ENCODE measurements at regions of chr1 and their contacts with region 1.

Region 1: DNA sequence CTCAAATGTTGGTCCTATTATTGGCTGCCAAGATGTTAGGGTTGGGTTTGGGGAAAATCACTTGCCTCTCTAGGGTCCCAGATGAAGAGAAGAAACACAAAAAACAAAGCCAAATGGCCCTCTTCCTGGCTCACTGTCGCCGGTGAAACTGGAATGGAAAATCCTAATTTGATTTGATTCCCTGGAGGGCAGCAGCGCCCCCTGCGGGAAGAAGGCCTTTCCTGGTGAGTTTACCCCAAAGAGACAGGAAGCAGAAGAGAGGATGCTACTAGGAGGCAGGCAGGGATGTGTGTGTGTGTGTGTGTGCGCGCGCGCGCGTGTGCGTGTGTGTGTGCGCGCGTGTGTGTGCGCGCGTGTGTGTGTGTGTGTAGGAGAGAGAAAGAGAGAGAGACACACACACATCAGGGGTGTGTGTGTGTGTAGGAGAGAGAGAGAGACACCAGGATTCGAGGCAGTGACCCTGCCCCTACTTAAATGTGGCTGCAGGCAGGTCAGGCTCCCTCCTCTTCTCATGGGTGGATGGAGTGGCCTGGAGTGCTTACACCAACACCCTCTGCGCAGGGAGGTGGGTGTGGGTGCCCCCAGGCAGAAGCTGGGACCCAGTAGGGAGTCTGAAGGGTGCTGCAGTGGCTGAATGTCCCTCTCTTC is 3.1 kb upstream of the SELENON start:
- H3K4me3 ChIP-seq: no peak overlapping the region
- H3K27ac ChIP-seq: no peak overlapping the region
- H3K4me1 ChIP-seq: 0 out of 2 replicates have a peak, but pooled peaks cover 2% of the 10 kb centered on the region
- CTCF ChIP-seq: peak; percentile 82

Region 2: DNA sequence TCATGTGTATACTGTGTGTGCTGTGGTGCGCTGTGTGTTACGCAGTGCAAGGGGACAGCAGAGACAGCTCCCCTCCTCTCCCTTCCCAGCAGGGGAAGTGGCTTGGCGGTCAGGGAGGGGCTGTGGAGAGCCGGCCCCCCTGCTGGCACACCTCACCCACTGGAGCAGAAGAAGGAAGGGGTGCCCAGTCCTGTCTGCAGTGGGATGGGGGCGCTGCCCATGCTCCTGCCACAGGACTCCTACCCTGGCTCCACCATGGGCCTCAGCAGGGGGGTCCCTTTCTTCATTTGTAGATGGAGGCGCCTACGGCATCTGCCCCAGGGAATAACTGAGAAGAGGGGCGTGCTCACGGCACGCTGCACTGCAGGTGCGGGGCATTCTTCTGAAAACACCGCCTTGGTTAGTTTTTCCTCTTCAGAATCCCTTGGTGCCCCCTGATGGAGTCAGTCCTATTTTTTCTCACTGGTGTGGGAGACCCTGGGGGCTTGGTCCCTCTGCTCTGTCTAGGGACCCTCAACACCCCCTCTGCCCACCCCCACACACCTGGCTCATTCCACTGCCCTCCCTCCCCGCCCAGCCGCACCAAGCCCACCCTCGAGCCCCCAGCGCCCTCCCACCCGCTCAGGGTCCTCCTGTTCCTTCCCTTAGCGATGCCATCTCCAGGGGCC is 267.3 kb before region 1 on chr1:
- CTCF ChIA-PET with region 1: no interaction called
- POLR2A ChIA-PET with region 1: no interaction called
- H3K4me3 ChIP-seq: no peak overlapping the region
- H3K27ac ChIP-seq: no peak overlapping the region
- H3K4me1 ChIP-seq: no peaks in the 10 kb centered on the region
- CTCF ChIP-seq: no peak

Region 3: GRCh38 chr1:25658791-25659431 is 138.0 kb before region 1 on chr1:
- CTCF ChIA-PET with region 1: no interaction called
- POLR2A ChIA-PET with region 1: no interaction called
- H3K4me3 ChIP-seq: no peak overlapping the region
- H3K27ac ChIP-seq: no peak overlapping the region
- H3K4me1 ChIP-seq: no peaks in the 10 kb centered on the region
- CTCF ChIP-seq: no peak

Region 4: DNA sequence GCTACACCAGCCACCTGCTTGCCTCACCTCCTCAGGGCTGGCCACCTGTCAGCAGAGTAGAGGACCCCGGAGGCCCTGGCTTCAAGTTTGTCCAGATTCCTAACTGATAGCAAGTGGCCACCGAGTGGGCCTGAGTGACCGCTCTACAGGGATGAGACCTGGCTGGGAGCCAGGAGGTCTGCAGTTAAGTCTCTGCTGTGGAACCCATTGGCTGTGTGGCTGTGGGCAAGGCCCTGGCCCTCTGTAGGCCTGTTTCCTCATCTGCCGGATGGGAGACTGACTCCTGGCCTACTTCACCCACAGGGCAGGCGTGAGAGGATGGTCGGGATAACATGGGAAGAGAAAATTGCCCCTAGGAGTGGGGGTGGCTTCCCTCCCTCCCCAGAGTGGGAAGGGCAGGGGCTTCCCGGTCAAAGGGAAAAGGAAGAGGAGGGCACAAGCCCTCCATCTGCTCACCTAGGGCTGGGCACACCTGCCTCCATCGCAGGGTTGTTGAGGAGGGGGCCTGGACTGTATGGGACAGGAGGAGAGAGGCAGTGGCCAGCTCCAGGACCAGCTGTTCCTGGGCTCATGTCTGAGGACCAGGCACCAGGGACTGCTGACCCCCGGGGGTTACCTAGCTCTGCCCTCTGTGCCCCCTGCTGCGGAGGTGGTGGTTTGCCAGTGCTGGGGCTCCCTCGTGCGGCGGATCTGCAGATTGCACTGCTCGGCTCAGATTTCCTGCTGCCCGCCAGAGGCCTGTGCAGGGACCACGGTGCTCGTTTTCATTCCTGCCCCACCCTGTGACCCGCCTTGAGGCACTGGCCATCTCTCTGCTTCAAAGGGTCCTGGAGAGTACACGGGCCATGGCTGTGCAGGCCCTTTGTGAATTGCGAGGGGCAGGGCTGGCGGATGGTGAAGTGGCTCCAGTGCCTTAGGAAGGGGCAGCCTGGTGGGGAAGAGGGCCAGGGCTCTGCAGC is 13.7 kb after region 1 on chr1:
- CTCF ChIA-PET with region 1: interaction called, 25 read pairs
- POLR2A ChIA-PET with region 1: interaction called, 14 read pairs
- H3K4me3 ChIP-seq: no peak overlapping the region
- H3K27ac ChIP-seq: no peak overlapping the region
- H3K4me1 ChIP-seq: no peaks in the 10 kb centered on the region
- CTCF ChIP-seq: peak; percentile 95

Region 5: DNA sequence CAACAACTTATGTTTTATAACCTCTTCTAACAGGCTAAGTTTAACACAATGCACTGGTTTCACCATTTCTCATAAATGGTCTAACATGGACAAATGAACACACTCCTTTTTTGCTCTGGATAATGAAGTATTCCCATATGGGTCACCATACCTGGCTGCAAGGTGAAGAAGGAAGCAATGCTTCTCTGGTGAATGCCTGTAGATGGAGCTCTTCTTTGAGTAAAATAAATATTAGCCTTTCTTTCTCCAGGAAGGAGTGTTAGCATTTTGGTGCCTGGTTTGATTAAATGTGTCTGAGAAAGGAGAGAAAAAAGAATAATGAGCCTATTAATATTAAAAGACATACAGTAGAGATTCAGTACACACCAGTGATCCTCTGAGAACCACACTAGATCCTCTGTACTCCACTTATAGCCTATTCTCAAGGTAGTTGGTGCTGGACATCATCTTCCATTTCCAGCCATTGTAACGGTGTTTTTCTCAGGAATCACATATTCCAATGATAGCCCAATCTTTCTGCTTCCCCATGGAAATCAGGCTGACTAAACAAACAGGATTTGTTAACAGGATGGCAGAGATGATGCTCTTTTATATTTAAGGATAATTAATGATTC is 40.4 kb after region 1 on chr1:
- CTCF ChIA-PET with region 1: no interaction called
- POLR2A ChIA-PET with region 1: no interaction called
- H3K4me3 ChIP-seq: no peak overlapping the region
- H3K27ac ChIP-seq: no peak overlapping the region
- H3K4me1 ChIP-seq: no peaks in the 10 kb centered on the region
- CTCF ChIP-seq: 0 out of 2 replicates have a peak, but pooled peaks have one; percentile 13